ENCODE measurements at regions of chr5 and their contacts with region 1.

Region 1: DNA sequence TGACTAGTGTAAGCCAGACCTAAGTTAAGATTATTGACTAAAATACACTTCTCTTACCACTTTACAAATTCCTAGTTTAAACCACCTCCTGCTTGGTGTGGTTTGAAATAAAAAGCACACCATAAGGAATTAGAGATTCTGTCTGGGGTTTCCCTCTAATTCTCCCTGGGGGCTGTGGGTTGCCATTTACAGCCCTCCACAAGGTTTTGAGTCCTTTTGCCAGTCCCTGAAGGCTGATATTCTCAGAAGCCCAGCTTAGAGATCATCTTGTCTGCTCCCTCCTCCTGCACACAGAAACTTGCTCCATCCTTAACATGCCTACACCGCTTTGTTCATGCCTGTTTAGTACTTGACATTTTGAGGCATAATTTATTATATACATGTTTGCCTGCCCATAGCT is 7.2 kb upstream of the LMNB1 start:
- DNase-seq: no peak
- H3K4me3 ChIP-seq: no peak overlapping the region
- H3K27ac ChIP-seq: no peak overlapping the region
- H3K4me1 ChIP-seq: no peaks in the 10 kb centered on the region
- H3K27me3 ChIP-seq: no peaks in the 10 kb centered on the region
- CTCF ChIP-seq: no peak
- EP300 ChIP-seq: no peak
- POLR2A ChIP-seq: no peak

Region 2: DNA sequence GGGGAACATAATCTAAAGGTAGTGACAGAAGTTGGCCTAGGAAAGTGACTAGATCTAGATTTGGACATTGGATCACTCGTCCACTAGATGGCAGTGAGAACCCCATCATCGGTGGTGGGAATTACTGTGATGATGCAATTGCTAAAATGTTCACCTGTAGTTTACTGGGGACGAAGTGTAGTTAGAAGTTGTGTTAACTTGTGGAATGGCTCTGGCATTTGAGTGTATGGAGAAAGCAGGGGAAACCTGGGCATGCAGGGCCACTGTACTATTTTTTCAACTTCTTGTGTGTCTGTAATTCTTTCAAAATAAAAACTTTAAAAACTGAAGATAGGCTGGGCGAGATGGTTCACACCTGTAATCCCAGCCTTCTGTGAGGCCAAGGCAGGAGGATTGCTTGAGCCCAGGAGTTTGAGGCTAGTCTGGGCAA is 93.5 kb before region 1 on chr5:
- in situ Hi-C with region 1: loop called in 1 of 4 experiments (anchors 5 kb)
- intact Hi-C with region 1: no loop called
- DNase-seq: peak; percentile 69
- H3K4me3 ChIP-seq: no peak overlapping the region
- H3K27ac ChIP-seq: no peak overlapping the region
- H3K4me1 ChIP-seq: peaks cover 0 to 32% (median 8%) of the 10 kb centered on the region in 4 donors
- H3K27me3 ChIP-seq: no peaks in the 10 kb centered on the region
- CTCF ChIP-seq: peak; percentile 76 to 90 (median 80)
- EP300 ChIP-seq: no peak
- POLR2A ChIP-seq: no peak

Region 3: GRCh38 chr5:126837906-126838539 is 68.3 kb after region 1 on chr5:
- in situ Hi-C with region 1: no loop called
- intact Hi-C with region 1: no loop called
- DNase-seq: no peak
- H3K4me3 ChIP-seq: no peak overlapping the region
- H3K27ac ChIP-seq: no peak overlapping the region
- H3K4me1 ChIP-seq: no peaks in the 10 kb centered on the region
- H3K27me3 ChIP-seq: no peaks in the 10 kb centered on the region
- CTCF ChIP-seq: peak; percentile 31 to 40 (median 38)
- EP300 ChIP-seq: no peak
- POLR2A ChIP-seq: no peak

Region 4: DNA sequence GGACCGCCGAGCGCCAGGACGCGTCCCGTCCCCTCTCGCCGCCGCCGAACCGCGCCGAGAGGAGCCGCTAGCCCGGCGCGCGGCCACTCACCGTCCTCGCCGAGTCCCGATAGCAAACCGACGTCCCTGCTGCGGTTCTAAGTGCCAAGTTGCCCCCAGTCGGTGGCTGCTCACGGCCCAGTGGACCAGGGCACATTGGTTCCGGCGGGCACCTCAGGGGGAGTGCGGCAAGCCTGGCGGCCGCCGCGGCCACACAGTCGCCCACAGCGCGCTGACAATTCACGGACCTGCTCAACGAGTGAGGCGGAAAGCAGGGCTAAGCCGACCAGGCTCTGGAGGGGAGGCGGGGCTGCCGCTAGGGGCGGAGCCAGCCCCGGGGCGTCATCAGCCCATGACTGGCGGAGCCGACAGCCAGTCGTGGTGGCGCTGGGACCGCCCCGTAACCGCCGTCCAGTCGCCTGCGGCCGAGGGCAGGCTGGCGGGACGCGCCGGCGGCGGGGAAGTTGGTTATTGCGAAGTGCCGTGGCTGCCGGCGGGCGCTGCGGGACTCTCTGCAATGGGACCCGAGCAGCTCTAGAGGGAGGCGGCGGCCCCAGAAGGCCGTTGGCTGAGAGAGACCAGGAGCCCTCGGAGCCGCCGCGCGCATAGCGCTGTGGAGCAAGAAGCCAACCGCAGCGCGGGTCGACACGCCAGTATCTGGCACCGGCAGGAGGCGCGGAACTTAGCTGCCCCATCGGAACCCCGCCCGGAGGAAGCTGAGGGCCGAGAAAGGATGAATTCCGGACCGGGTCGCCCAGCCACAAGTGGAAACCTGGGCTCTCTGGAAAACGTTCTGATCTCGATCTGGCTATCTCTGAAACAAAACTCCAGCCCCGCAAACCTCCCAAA is 260.8 kb after region 1 on chr5 and contains the start of gene MARCHF3:
- in situ Hi-C with region 1: no loop called
- intact Hi-C with region 1: no loop called
- DNase-seq: peak; percentile 97
- H3K4me3 ChIP-seq: peak within 1 kb of the TSS; percentile 58 to 74 (median 64)
- H3K27ac ChIP-seq: peak within 1 kb of the TSS; percentile 88 to 95 (median 91)
- H3K4me1 ChIP-seq: peaks cover 0 to 38% (median 8%) of the 10 kb centered on the region in 4 donors
- H3K27me3 ChIP-seq: no peaks in the 10 kb centered on the region
- CTCF ChIP-seq: peak in 4 of 5 experiments; percentile 7 to 49 (median 26)
- EP300 ChIP-seq: no peak
- POLR2A ChIP-seq: peak; percentile 99
- total RNA-seq, gene MARCHF3: 20.3 to 29.6 (median 23.0) TPM